Activated CD8-positive, alpha-beta T cell treated with anti-CD3 and anti-CD28 coated beads, Interleukin-2, amount 10 ng/mL, durations not matched to agents 7 days and 5 days (primary cell): ENCODE measurements at regions of chr2 and their contacts with region 1.

Region 1: GRCh38 chr2:63841254-63842022 is at the start of gene UGP2:
- DNase-seq: peak; percentile 94
- ATAC-seq: peak; percentile 76
- H3K4me3 Mint-ChIP-seq: peak within 1 kb of the TSS; percentile 98
- H3K27ac Mint-ChIP-seq: peak within 1 kb of the TSS; percentile 99
- H3K4me1 Mint-ChIP-seq: peaks cover 55% of the 10 kb centered on the region
- H3K27me3 Mint-ChIP-seq: peaks cover 2% of the 10 kb centered on the region
- total RNA-seq, gene UGP2: 161 to 164 TPM

Region 2: DNA sequence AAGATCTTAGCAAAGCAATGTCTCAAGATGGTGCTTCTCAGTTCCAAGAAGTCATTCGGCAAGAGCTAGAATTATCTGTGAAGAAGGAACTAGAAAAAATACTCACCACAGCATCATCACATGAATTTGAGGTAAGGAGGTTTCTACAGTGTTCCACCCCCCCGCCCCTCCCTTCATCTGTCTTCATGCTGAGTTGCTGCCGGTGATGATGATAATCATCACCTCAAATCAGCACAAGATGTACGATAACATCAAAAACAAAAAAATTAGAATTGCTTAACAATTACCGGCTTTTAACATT is 14.8 kb after region 1 on chr2:
- CTCF ChIA-PET with region 1: interaction called, 95 read pairs
- POLR2A ChIA-PET with region 1: interaction called, 315 read pairs
- DNase-seq: peak; percentile 79
- ATAC-seq: peak; percentile 89
- H3K4me3 Mint-ChIP-seq: peak overlapping the region; percentile 72
- H3K27ac Mint-ChIP-seq: peak overlapping the region; percentile 96
- H3K4me1 Mint-ChIP-seq: peaks cover 74% of the 10 kb centered on the region
- H3K27me3 Mint-ChIP-seq: no peaks in the 10 kb centered on the region